ENCODE measurements at regions of chr4 and their contacts with region 1.

Region 1: DNA sequence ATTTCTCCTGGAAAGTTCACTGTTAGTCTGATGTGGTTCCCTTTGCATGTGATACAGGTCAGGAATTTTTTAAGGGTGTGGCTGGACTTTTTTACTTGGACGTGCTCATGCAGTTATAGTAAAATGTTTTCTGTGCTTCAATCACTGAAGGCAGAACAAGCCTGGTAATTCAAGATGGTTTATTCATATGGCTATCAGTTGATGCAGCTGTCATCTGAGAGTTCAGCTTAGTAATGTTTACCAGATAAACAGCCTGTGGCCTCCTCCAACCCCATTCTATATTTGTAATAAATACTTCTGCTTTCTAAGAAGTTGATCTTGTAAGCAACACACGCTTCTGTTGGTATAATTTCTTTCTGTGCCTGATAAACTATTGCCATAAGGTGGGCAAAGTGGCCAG is 2105.9 kb downstream of the ARAP2 start:
- DNase-seq: no peak
- H3K4me3 ChIP-seq: no peak overlapping the region
- H3K27ac ChIP-seq: no peak overlapping the region
- H3K4me1 ChIP-seq: no peaks in the 10 kb centered on the region
- H3K27me3 ChIP-seq: no peaks in the 10 kb centered on the region
- CTCF ChIP-seq: no peak
- POLR2A ChIP-seq: no peak

Region 2: DNA sequence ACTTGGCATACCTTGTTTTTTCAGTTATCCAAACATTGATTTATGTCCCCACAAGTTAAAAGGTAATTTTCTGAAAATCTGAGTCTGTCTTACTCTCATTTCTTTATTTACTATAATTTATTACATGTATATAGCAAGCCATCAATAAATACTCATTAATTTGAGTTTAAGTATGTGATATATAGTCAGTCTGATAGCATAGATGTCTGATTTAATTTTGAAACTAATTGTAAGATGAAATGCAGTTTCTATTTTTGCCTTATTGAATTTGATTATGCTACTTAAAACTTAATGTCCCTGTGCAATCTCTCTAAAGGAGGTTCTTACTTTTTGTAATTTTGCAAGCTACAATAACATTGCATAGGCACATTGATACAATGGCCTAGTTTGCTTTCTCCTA is 312.7 kb before region 1 on chr4:
- CTCF ChIA-PET with region 1: no interaction called
- POLR2A ChIA-PET with region 1: no interaction called
- dilution Hi-C with region 1: no loop called
- intact Hi-C with region 1: no loop called
- DNase-seq: no peak
- H3K4me3 ChIP-seq: no peak overlapping the region
- H3K27ac ChIP-seq: no peak overlapping the region
- H3K4me1 ChIP-seq: no peaks in the 10 kb centered on the region
- H3K27me3 ChIP-seq: no peaks in the 10 kb centered on the region
- CTCF ChIP-seq: no peak
- POLR2A ChIP-seq: no peak

Region 3: DNA sequence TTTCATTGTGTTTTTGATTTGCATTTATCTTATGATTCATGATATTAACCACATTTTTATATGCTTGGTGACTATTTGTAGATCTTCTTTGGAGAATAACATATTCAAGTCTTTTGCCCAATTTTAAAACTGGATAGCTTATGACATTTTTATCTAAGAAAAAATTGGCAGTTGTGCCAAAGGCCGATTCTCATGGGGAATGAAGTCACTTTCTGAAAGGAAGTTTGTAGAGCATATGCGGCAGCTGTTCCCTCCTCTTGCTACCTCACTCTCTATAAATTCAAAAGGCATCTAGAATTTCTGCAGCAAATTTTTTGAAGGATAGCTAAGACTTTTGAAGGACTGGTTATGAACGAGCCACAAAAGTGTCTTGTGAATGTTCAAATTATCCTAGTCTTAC is 247.5 kb before region 1 on chr4:
- CTCF ChIA-PET with region 1: no interaction called
- POLR2A ChIA-PET with region 1: no interaction called
- dilution Hi-C with region 1: no loop called
- intact Hi-C with region 1: no loop called
- DNase-seq: no peak
- H3K4me3 ChIP-seq: no peak overlapping the region
- H3K27ac ChIP-seq: no peak overlapping the region
- H3K4me1 ChIP-seq: no peaks in the 10 kb centered on the region
- H3K27me3 ChIP-seq: no peaks in the 10 kb centered on the region
- CTCF ChIP-seq: no peak
- POLR2A ChIP-seq: no peak

Region 4: GRCh38 chr4:33941854-33942253 is 196.5 kb before region 1 on chr4:
- CTCF ChIA-PET with region 1: no interaction called
- POLR2A ChIA-PET with region 1: no interaction called
- dilution Hi-C with region 1: no loop called
- intact Hi-C with region 1: no loop called
- DNase-seq: no peak
- H3K4me3 ChIP-seq: no peak overlapping the region
- H3K27ac ChIP-seq: no peak overlapping the region
- H3K4me1 ChIP-seq: no peaks in the 10 kb centered on the region
- H3K27me3 ChIP-seq: no peaks in the 10 kb centered on the region
- CTCF ChIP-seq: no peak
- POLR2A ChIP-seq: no peak

Region 5: DNA sequence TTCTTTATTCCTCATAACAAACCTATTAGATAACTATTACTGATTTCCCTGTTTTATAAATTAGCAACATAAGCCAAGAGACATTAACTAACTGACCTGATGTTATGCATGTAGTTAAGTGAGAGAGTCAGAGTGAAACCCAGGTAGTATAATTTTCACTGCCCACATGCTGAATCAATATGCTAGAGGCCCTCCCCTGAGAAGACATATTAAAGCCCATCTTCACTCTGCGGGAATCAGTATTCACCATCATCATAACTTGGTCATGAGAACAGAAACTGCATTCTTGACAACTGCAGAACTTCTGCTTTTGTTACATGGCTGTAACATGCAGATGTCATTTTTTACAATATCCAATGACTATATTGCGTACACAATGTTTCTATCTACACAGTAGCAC is 781.6 kb after region 1 on chr4:
- CTCF ChIA-PET with region 1: no interaction called
- POLR2A ChIA-PET with region 1: no interaction called
- dilution Hi-C with region 1: no loop called
- intact Hi-C with region 1: loop called (anchors 10 kb)
- DNase-seq: no peak
- H3K4me3 ChIP-seq: no peak overlapping the region
- H3K27ac ChIP-seq: no peak overlapping the region
- H3K4me1 ChIP-seq: no peaks in the 10 kb centered on the region
- H3K27me3 ChIP-seq: no peaks in the 10 kb centered on the region
- CTCF ChIP-seq: no peak
- POLR2A ChIP-seq: no peak

Measured in endothelial cell of umbilical vein (primary cell).